CD14-positive monocyte (primary cell): ENCODE measurements at regions of chr1 and their contacts with region 1.

Region 1: DNA sequence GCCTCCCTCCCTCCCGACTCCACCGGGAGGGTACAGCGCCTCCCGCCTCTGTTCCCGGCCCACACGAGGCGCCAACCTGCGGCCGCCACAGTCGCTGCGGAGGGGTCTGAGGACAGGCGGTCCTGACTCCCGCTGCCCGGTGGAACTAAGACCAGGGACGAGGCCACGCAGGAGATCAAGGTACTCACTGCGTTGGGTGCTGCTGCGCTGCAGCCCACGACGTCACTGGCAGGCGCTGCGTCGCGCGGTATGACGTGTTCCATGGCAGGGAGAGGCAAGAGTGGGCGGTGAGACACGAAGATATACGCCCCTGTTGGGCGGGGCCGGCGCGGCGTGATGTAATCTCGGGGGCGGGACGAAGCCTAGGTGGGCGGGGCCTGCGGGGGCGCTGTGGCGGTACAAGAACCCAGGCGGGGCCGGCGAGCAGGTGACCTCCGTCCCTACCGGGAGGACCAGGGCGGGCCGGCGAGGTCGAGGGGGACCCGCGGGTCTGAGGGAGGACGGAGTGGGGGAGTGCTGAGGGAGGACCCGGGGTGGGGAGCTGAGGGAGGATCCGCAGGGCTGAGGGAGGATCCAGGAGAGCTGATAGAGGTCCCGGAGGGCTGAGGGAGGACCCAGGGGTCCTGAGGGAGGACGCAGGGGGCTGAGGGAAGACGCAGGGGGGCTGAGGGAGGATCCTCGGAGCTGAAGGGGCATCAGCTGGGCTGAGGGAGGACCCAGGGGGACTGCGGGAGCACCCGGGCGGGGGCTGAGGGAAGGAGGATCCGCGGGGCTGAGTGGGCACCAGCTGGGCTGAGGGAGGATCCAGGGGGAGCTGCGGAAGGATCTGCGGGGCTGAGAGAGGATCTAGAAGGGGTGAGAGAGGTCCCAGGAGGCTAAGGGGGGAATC is at the start of gene MRPL55:
- DNase-seq: peak; percentile 94 to 98 (median 97)
- H3K4me3 ChIP-seq: peak within 1 kb of the TSS; percentile 83 to 92 (median 91)
- H3K4me3 Mint-ChIP-seq: peak within 1 kb of the TSS; percentile 90 to 92
- H3K27ac ChIP-seq: peak within 1 kb of the TSS; percentile 81 to 98
- H3K27ac Mint-ChIP-seq: peak within 1 kb of the TSS; percentile 89 to 97 (median 95)
- H3K4me1 ChIP-seq: peaks cover 25 to 42% of the 10 kb centered on the region in 2 donors
- H3K4me1 Mint-ChIP-seq: peaks cover 37% of the 10 kb centered on the region
- H3K27me3 ChIP-seq: no peaks in the 10 kb centered on the region
- H3K27me3 Mint-ChIP-seq: no peaks in the 10 kb centered on the region
- CTCF ChIP-seq: no peak
- polyA plus RNA-seq, gene MRPL55: 99.8 to 277 (median 104) TPM

Region 2: DNA sequence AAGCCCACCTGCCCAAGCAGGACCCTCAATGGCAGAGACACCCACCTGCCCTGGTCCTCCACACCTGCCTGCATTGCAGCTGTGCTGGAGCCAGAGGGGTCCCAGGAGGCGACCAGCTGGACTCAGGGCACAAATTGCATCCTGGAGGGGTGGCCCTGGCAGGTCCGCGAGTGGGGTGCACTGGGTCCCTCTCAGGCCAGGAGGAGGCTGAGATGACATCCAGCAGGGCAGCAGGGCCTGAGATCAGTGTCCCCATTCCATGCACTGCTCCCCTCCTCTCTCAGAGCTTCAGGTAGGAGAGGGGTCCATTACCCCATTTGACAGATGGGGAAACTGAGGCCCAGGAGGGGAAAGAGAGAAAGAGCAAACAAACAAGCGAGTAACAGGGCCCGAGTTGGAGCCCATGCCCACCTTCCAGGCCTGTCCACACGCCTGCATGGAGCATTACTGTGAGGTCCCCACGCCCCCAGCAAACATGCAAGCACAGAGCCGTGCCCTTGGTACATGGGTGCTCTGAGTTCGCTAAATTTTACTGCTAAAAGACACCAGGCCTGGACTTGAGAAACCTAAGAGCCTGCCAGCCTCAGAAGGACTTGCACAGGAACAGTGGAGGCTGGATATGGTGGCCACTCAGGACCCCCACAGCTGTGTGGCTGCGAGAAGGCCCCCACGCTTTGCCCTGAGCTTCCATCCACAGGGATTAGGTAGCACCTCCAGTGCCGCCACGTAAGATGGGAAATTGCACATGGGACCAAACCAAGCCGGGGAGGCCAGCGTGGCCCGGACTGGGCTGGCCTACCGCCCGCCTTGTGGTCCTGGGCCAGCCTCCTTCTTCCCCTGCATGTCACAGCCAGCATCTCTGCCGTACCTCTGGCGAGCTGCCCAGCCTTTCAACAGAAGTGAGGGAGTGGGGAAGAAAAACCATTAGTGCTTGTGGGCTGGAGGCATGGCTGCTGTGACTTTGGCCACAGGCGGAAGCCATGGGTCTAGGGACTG is 95.1 kb before region 1 on chr1:
- intact Hi-C with region 1: no loop called
- DNase-seq: no peak
- H3K4me3 ChIP-seq: no peak overlapping the region
- H3K4me3 Mint-ChIP-seq: no peak overlapping the region
- H3K27ac ChIP-seq: no peak overlapping the region
- H3K27ac Mint-ChIP-seq: no peak overlapping the region
- H3K4me1 ChIP-seq: no peaks in the 10 kb centered on the region
- H3K4me1 Mint-ChIP-seq: no peaks in the 10 kb centered on the region
- H3K27me3 ChIP-seq: peaks cover 0 to 8% of the 10 kb centered on the region in 2 donors
- H3K27me3 Mint-ChIP-seq: peaks cover 7 to 20% (median 11%) of the 10 kb centered on the region in 3 donors
- CTCF ChIP-seq: no peak

Region 3: GRCh38 chr1:228082135-228082891 is 27.0 kb before region 1 on chr1 and contains the start of gene ARF1:
- intact Hi-C with region 1: loop called in 1 of 2 experiments (anchors 2 kb)
- DNase-seq: peak; percentile 91 to 94 (median 93)
- H3K4me3 ChIP-seq: peak within 1 kb of the TSS; percentile 89 to 93 (median 90)
- H3K4me3 Mint-ChIP-seq: peak within 1 kb of the TSS; percentile 96 to 97
- H3K27ac ChIP-seq: peak within 1 kb of the TSS; percentile 94 to 96
- H3K27ac Mint-ChIP-seq: peak within 1 kb of the TSS; percentile 96 to 99 (median 98)
- H3K4me1 ChIP-seq: peaks cover 48 to 50% of the 10 kb centered on the region in 2 donors
- H3K4me1 Mint-ChIP-seq: peaks cover 50% of the 10 kb centered on the region
- H3K27me3 ChIP-seq: no peaks in the 10 kb centered on the region
- H3K27me3 Mint-ChIP-seq: peaks cover 0 to 2% (median under 1%) of the 10 kb centered on the region in 3 donors
- CTCF ChIP-seq: no peak
- polyA plus RNA-seq, gene ARF1: 580 to 789 (median 603) TPM

Region 4: GRCh38 chr1:228457396-228458176 is 348.3 kb after region 1 on chr1:
- intact Hi-C with region 1: loop called in 1 of 2 experiments (anchors 5 kb)
- DNase-seq: peak; percentile 88 to 91 (median 90)
- H3K4me3 ChIP-seq: peak overlapping the region; percentile 34 to 78 (median 42)
- H3K4me3 Mint-ChIP-seq: peak overlapping the region; percentile 88 to 95
- H3K27ac ChIP-seq: peak overlapping the region; percentile 56 to 62
- H3K27ac Mint-ChIP-seq: peak overlapping the region; percentile 86 to 96 (median 93)
- H3K4me1 ChIP-seq: peaks cover 33 to 41% of the 10 kb centered on the region in 2 donors
- H3K4me1 Mint-ChIP-seq: peaks cover 35% of the 10 kb centered on the region
- H3K27me3 ChIP-seq: peaks cover 18 to 45% of the 10 kb centered on the region in 2 donors
- H3K27me3 Mint-ChIP-seq: peaks cover 35 to 62% (median 61%) of the 10 kb centered on the region in 3 donors
- CTCF ChIP-seq: peak; percentile 36